Activated CD4-positive, alpha-beta T cell treated with anti-CD3 and anti-CD28 coated beads, Interleukin-2, amount 10 ng/mL, durations not matched to agents 24 days and 14 days (primary cell): ENCODE measurements at regions of chr2 and their contacts with region 1.

Region 1: DNA sequence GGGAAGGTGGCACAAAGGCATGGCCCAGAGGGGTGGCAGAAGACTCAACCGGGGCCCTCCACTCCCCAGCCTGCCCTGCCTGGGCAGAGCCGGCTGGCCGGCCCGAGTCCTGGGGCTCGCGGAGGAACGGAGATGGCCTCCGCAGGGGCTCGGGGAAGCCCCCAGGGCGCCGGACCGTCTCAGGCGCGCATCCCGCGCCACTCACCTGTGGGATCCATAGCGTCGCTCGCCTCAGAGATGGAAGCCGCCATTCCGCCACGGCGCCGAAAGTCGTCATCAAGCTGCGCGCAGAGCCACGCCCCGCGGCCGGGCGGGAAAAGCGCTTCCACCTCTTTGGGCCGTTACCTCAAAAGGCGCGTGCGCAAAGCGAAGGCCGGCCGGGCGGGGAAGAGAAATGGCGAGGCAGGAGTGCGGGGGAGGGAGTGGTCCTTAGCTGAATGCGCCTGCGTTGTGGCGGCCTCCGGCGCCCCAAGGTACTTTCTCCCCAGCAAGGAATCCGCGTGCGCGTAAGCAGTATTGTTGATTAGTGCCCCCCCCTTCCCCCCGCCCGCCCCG is at the start of gene SMPD4:
- DNase-seq: peak; percentile 99
- H3K4me3 Mint-ChIP-seq: peak within 1 kb of the TSS; percentile 93
- H3K27ac Mint-ChIP-seq: peak within 1 kb of the TSS; percentile 96
- H3K4me1 Mint-ChIP-seq: peaks cover 7% of the 10 kb centered on the region
- H3K27me3 Mint-ChIP-seq: no peaks in the 10 kb centered on the region
- total RNA-seq, gene SMPD4: 86.0 and 91.1 TPM in 2 replicates

Region 2: GRCh38 chr2:130150181-130151144 is 30.9 kb before region 1 on chr2:
- intact Hi-C with region 1: loop called (anchors 1 kb)
- DNase-seq: no peak
- H3K4me3 Mint-ChIP-seq: no peak overlapping the region
- H3K27ac Mint-ChIP-seq: no peak overlapping the region
- H3K4me1 Mint-ChIP-seq: peaks cover 5% of the 10 kb centered on the region
- H3K27me3 Mint-ChIP-seq: peaks cover 7% of the 10 kb centered on the region